ENCODE measurements at regions of chr2 and their contacts with region 1.

Region 1: GRCh38 chr2:195533771-195534642 is 123.0 kb upstream of the SLC39A10 start:
- DNase-seq: peak; percentile 86
- ATAC-seq: peak; percentile 72
- H3K4me3 Mint-ChIP-seq: peak overlapping the region; percentile 81
- H3K27ac Mint-ChIP-seq: peak overlapping the region; percentile 95
- H3K4me1 Mint-ChIP-seq: peaks cover 82% of the 10 kb centered on the region
- H3K27me3 Mint-ChIP-seq: no peaks in the 10 kb centered on the region
- CTCF ChIP-seq: peak; percentile 22

Region 2: DNA sequence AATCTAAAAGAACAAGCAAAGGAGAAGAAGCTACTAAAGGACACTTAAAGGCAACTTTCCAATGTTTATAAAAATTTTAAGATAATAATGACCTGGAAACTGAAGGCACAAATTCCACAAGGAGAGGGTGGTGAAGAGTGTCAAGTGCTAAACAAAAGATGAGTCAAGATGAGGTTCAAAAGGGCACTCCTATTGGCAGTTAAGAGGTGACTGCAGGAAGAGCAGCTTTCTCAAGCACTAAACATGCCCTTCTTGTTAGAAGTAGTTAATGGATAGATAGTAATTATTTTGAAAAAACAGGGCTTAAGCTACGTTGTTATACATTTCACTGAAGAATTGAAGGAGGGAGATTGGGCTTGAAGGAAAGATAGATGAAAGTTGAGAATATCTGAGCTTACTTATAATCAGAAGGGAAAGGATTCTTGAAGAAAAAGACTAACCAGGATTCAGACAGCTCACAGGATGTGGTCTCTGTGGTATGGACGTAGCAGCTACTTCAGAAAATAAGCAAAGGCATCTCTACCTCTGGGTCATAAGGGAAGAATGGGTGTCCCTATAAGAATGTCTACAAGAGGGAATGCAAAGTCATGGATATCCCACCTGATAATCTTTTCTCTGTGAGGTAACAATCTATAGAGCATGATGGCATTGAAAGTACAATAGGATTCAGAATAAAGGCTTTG is 331.7 kb before region 1 on chr2:
- CTCF ChIA-PET with region 1: no interaction called
- POLR2A ChIA-PET with region 1: no interaction called
- intact Hi-C with region 1: no loop called
- DNase-seq: peak; percentile 39
- ATAC-seq: peak; percentile 64
- H3K4me3 Mint-ChIP-seq: no peak overlapping the region
- H3K27ac Mint-ChIP-seq: no peak overlapping the region
- H3K4me1 Mint-ChIP-seq: peaks cover 19% of the 10 kb centered on the region
- H3K27me3 Mint-ChIP-seq: no peaks in the 10 kb centered on the region
- CTCF ChIP-seq: no peak

Region 3: GRCh38 chr2:195486987-195487644 is 46.9 kb before region 1 on chr2:
- CTCF ChIA-PET with region 1: interaction called, 3 read pairs
- POLR2A ChIA-PET with region 1: no interaction called
- intact Hi-C with region 1: loop called (anchors 2 kb)
- DNase-seq: peak; percentile 35
- ATAC-seq: peak; percentile 86
- H3K4me3 Mint-ChIP-seq: peak overlapping the region; percentile 18
- H3K27ac Mint-ChIP-seq: peak overlapping the region; percentile 70
- H3K4me1 Mint-ChIP-seq: peaks cover 20% of the 10 kb centered on the region
- H3K27me3 Mint-ChIP-seq: no peaks in the 10 kb centered on the region
- CTCF ChIP-seq: no peak

Region 4: DNA sequence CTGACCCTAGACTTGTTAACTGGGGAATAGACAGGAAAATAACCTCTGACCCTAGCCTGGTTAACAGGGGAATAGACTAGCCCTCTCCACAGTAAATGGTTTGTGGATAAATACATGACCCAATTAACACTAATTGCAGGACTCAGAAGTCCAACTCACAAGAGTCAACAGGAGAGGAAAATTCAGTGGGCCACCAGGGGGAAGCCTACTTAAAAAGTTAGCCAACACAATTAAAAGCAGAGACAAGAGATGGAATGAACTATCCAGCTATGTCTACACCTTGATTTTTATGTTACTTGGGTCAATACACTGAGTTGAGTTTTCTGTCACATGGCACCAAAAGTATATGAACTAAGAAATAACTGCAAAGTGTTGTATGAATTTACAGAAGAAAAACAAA is 35.8 kb before region 1 on chr2:
- CTCF ChIA-PET with region 1: interaction called, 19 read pairs
- POLR2A ChIA-PET with region 1: no interaction called
- intact Hi-C with region 1: no loop called
- DNase-seq: peak; percentile 76
- ATAC-seq: peak; percentile 58
- H3K4me3 Mint-ChIP-seq: no peak overlapping the region
- H3K27ac Mint-ChIP-seq: peak overlapping the region; percentile 2
- H3K4me1 Mint-ChIP-seq: peaks cover 27% of the 10 kb centered on the region
- H3K27me3 Mint-ChIP-seq: no peaks in the 10 kb centered on the region
- CTCF ChIP-seq: peak; percentile 51

Region 5: GRCh38 chr2:195543902-195544894 is 10.2 kb after region 1 on chr2:
- CTCF ChIA-PET with region 1: interaction called, 6 read pairs
- POLR2A ChIA-PET with region 1: interaction called, 25 read pairs
- intact Hi-C with region 1: no loop called
- DNase-seq: no peak
- ATAC-seq: peak; percentile 91
- H3K4me3 Mint-ChIP-seq: no peak overlapping the region
- H3K27ac Mint-ChIP-seq: peak overlapping the region; percentile 87
- H3K4me1 Mint-ChIP-seq: peaks cover 33% of the 10 kb centered on the region
- H3K27me3 Mint-ChIP-seq: no peaks in the 10 kb centered on the region
- CTCF ChIP-seq: no peak

Region 6: DNA sequence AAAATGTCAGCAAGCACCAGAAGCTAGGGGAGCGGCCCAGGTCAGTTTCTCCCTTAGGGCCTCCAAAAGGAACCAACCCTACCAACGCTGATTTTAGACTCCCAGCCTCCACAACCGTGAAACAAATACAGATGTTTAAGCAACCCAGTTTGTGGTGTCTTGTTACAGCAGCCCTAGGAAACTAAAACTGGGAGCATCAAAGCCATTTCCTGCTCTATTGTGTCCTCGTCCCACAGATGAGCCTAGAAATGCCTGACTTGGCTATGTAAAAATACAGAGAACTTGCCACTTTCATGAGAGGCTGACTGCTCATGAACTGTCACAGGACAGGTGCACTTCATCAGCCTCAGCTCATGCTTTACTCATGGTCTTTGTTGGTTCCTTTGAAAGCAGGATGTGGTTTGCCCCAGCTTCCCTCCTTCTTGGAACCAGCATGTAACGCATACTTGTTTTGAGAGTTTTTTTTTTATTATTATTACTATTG is 25.5 kb after region 1 on chr2:
- CTCF ChIA-PET with region 1: interaction called, 10 read pairs
- POLR2A ChIA-PET with region 1: interaction called, 16 read pairs
- intact Hi-C with region 1: loop called (anchors 1 kb)
- DNase-seq: peak; percentile 92
- ATAC-seq: peak; percentile 84
- H3K4me3 Mint-ChIP-seq: peak overlapping the region; percentile 54
- H3K27ac Mint-ChIP-seq: peak overlapping the region; percentile 97
- H3K4me1 Mint-ChIP-seq: peaks cover 62% of the 10 kb centered on the region
- H3K27me3 Mint-ChIP-seq: no peaks in the 10 kb centered on the region
- CTCF ChIP-seq: no peak